Heart right ventricle (tissue), 16 donors: ENCODE measurements at regions of chr1 and their contacts with region 1.

Region 1: GRCh38 chr1:150477733-150478132 is 9.5 kb upstream of the TARS2 start:
- DNase-seq: no peak
- ATAC-seq: no peak
- H3K4me3 ChIP-seq: no peak overlapping the region
- H3K27ac ChIP-seq: peak overlapping the region in 7 of 10 donors; percentile 17 to 74 (median 30)
- H3K4me1 ChIP-seq: peaks cover 4 to 40% (median 22%) of the 10 kb centered on the region in 9 donors
- H3K27me3 ChIP-seq: no peaks in the 10 kb centered on the region
- CTCF ChIP-seq: no peak

Region 2: GRCh38 chr1:150281837-150282653 is 195.7 kb before region 1 on chr1 and contains the start of gene CIART:
- intact Hi-C with region 1: no loop called
- DNase-seq: peak; percentile 85 to 96
- ATAC-seq: peak; percentile 94 to 97 (median 96)
- H3K4me3 ChIP-seq: peak within 1 kb of the TSS; percentile 35 to 76 (median 59)
- H3K27ac ChIP-seq: peak within 1 kb of the TSS; percentile 83 to 93 (median 91)
- H3K4me1 ChIP-seq: peaks cover 0 to 32% (median 24%) of the 10 kb centered on the region in 9 donors
- H3K27me3 ChIP-seq: peaks cover 0 to 11% (median 0%) of the 10 kb centered on the region in 7 donors
- CTCF ChIP-seq: no peak
- total RNA-seq, gene CIART: 3.4 to 22.6 (median 15.5) TPM

Region 3: GRCh38 chr1:150507905-150508854 is 30.4 kb after region 1 on chr1 and contains the start of gene ECM1:
- intact Hi-C with region 1: loop called in 1 of 10 experiments (anchors 5 kb)
- DNase-seq: peak; percentile 33 to 79
- ATAC-seq: peak; percentile 66 to 94 (median 91)
- H3K4me3 ChIP-seq: peak within 1 kb of the TSS in 9 of 10 donors; percentile 24 to 54 (median 46)
- H3K27ac ChIP-seq: peak within 1 kb of the TSS; percentile 41 to 90 (median 82)
- H3K4me1 ChIP-seq: peaks cover 0 to 28% (median 12%) of the 10 kb centered on the region in 9 donors
- H3K27me3 ChIP-seq: no peaks in the 10 kb centered on the region
- CTCF ChIP-seq: no peak
- total RNA-seq, gene ECM1: 5.8 to 26.3 (median 12.8) TPM

Region 4: DNA sequence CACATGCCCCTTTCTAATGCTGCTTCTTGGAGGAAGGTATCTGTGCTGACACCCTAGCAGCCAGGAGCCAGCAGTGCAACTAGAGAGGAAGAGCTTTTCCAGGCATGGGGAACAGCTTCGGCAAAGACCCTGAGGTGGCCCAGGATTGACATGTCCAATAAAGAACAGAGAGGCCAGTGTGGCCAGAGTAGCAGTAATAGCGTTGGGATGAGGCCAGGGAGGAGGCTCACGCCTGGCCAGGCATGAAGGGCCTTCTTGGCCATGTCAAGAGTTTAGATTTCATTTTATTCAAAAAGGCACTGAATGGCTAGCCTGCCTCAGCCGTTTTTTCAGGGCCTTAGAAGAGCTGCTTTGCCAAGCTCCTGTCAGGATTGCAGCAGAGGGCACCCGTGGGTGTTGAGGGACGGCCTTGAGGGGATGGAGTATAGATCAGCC is 55.2 kb after region 1 on chr1:
- intact Hi-C with region 1: loop called in 6 of 10 experiments (anchors 5 to 10 kb)
- DNase-seq: no peak
- ATAC-seq: peak in 2 of 8 donors; percentile 3 to 9
- H3K4me3 ChIP-seq: no peak overlapping the region
- H3K27ac ChIP-seq: peak overlapping the region in 9 of 10 donors; percentile 17 to 89 (median 72)
- H3K4me1 ChIP-seq: peaks cover 2 to 62% (median 27%) of the 10 kb centered on the region in 9 donors
- H3K27me3 ChIP-seq: no peaks in the 10 kb centered on the region
- CTCF ChIP-seq: peak in 4 of 9 donors; percentile 4 to 38 (median 24)

Region 5: GRCh38 chr1:150537732-150538684 is 60.3 kb after region 1 on chr1:
- intact Hi-C with region 1: loop called in 6 of 10 experiments (anchors 5 to 10 kb)
- DNase-seq: no peak
- ATAC-seq: peak in 2 of 8 donors; percentile 26 to 43
- H3K4me3 ChIP-seq: no peak overlapping the region
- H3K27ac ChIP-seq: peak overlapping the region in 3 of 10 donors; percentile 9 to 36 (median 26)
- H3K4me1 ChIP-seq: peaks cover 0 to 39% (median 15%) of the 10 kb centered on the region in 9 donors
- H3K27me3 ChIP-seq: no peaks in the 10 kb centered on the region
- CTCF ChIP-seq: no peak

Region 6: DNA sequence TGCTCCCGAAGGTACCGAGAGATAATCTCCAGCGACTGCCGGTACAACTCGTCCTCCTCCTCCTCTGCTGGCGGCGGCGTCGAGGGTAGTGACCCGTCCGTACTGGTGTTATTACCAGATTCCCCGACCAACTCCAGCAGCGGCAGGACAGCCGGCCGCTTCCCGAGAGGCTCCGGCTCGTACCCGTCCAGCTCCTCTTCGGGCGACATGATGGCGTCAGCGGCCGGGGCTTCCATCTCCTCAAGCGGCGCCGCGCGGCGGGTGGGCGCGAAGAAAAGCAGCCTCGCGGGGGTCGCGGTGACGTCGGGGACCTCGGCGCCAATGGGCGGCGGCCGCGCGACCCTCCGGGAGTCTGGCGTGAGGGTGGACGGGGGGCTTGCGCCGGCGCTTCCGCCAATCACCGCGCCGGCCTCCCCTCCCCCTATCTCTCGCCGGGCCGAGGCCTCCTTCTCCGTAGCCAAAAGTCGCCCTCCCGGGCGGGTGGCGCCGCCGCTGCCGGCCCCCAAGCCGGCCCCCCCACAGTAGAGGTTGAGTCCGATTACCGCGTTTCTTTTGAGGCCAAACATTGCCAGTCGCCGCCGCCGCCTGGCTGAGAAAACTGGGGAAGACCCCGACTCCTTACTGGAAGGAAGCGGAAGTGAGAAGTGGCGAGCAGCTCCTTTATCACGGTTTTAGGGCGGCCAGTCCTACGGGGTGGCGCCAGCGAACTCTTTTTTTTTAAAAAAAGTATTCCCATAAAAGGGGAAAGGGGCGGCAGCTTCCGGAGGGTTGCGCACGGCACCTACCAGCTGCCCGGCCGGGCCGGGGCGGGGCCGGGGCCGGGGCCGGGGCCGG is 101.4 kb after region 1 on chr1 and contains the start of gene MCL1:
- intact Hi-C with region 1: no loop called
- DNase-seq: peak; percentile 93 to 96
- ATAC-seq: peak; percentile 87 to 95 (median 90)
- H3K4me3 ChIP-seq: peak within 1 kb of the TSS; percentile 82 to 99 (median 96)
- H3K27ac ChIP-seq: peak within 1 kb of the TSS; percentile 91 to 100 (median 100)
- H3K4me1 ChIP-seq: peaks cover 0 to 46% (median 30%) of the 10 kb centered on the region in 9 donors
- H3K27me3 ChIP-seq: no peaks in the 10 kb centered on the region
- CTCF ChIP-seq: peak in 2 of 9 donors; percentile 16 to 19
- total RNA-seq, gene MCL1: 76.4 to 155 (median 122) TPM

Region 7: GRCh38 chr1:151070474-151071276 is 592.9 kb after region 1 on chr1 and contains the start of gene GABPB2:
- intact Hi-C with region 1: no loop called
- DNase-seq: peak; percentile 93 to 96
- ATAC-seq: peak; percentile 92 to 97 (median 96)
- H3K4me3 ChIP-seq: peak within 1 kb of the TSS; percentile 51 to 95 (median 78)
- H3K27ac ChIP-seq: peak within 1 kb of the TSS; percentile 96 to 100 (median 99)
- H3K4me1 ChIP-seq: peaks cover 4 to 29% (median 20%) of the 10 kb centered on the region in 9 donors
- H3K27me3 ChIP-seq: no peaks in the 10 kb centered on the region
- CTCF ChIP-seq: peak in 8 of 9 donors; percentile 91 to 98 (median 94)
- total RNA-seq, gene GABPB2: 9.1 to 14.4 (median 10.6) TPM